ENCODE measurements at regions of chr11 and their contacts with region 1.

Region 1: GRCh38 chr11:65027213-65028067 is at the start of gene SNX15:
- DNase-seq: peak; percentile 77 to 96 (median 90)
- ATAC-seq: peak; percentile 96
- H3K4me3 ChIP-seq: peak within 1 kb of the TSS; percentile 34 to 54
- H3K4me3 Mint-ChIP-seq: peak within 1 kb of the TSS; percentile 69
- H3K27ac ChIP-seq: peak within 1 kb of the TSS; percentile 41 to 71
- H3K27ac Mint-ChIP-seq: peak within 1 kb of the TSS; percentile 80
- H3K4me1 ChIP-seq: peaks cover 19% of the 10 kb centered on the region
- H3K4me1 Mint-ChIP-seq: peaks cover 18% of the 10 kb centered on the region
- H3K27me3 ChIP-seq: no peaks in the 10 kb centered on the region
- H3K27me3 Mint-ChIP-seq: no peaks in the 10 kb centered on the region
- CTCF ChIP-seq: peak; percentile 80
- total RNA-seq, gene SNX15: 10.4 to 14.0 TPM

Region 2: GRCh38 chr11:64842851-64843685 is 184.4 kb before region 1 on chr11:
- CTCF ChIA-PET with region 1: no interaction called
- POLR2A ChIA-PET with region 1: no interaction called
- intact Hi-C with region 1: no loop called
- DNase-seq: no peak
- ATAC-seq: no peak
- H3K4me3 ChIP-seq: no peak overlapping the region
- H3K4me3 Mint-ChIP-seq: peak overlapping the region; percentile 55
- H3K27ac ChIP-seq: no peak overlapping the region
- H3K27ac Mint-ChIP-seq: no peak overlapping the region
- H3K4me1 ChIP-seq: peaks cover 27% of the 10 kb centered on the region
- H3K4me1 Mint-ChIP-seq: peaks cover 26% of the 10 kb centered on the region
- H3K27me3 ChIP-seq: no peaks in the 10 kb centered on the region
- H3K27me3 Mint-ChIP-seq: no peaks in the 10 kb centered on the region
- CTCF ChIP-seq: no peak

Region 3: DNA sequence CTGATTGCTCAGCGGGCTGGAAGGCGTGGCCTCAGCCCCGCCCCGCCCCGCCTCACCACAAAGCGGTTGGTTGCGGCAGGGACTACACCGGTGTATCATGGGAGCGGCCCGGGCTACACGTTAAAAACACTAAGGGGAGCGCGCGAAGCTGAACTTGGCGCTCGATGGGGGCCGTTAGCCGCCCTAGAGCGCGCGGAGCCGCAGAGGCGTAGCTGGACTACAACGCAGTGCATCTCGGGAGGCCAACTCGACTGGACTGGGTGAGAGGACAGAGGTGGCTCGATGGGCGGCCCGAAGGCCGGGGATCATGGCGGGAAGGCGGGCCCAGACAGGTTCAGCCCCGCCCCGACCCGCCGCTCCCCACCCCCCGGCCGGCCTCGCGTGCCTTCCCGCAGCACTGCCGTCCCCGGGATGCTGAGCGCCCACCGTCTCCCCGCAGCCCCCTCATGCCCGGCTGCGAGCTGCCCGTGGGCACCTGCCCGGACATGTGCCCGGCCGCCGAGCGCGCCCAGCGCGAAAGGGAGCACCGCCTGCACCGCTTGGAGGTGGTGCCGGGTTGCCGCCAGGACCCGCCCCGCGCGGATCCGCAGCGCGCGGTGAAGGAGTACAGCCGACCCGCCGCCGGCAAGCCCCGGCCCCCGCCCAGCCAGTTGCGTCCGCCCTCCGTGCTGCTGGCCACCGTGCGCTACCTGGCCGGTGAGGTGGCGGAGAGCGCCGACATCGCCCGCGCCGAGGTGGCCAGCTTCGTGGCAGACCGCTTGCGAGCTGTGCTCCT is 13.6 kb after region 1 on chr11 and contains the start of gene SAC3D1:
- CTCF ChIA-PET with region 1: interaction called, 7 read pairs
- POLR2A ChIA-PET with region 1: interaction called, 20 read pairs
- intact Hi-C with region 1: loop called (anchors 1 kb)
- DNase-seq: peak; percentile 67 to 94 (median 85)
- ATAC-seq: peak; percentile 90
- H3K4me3 ChIP-seq: peak within 1 kb of the TSS; percentile 63 to 76
- H3K4me3 Mint-ChIP-seq: peak within 1 kb of the TSS; percentile 93
- H3K27ac ChIP-seq: peak within 1 kb of the TSS; percentile 34 to 82
- H3K27ac Mint-ChIP-seq: peak within 1 kb of the TSS; percentile 91
- H3K4me1 ChIP-seq: peaks cover 17% of the 10 kb centered on the region
- H3K4me1 Mint-ChIP-seq: peaks cover 15% of the 10 kb centered on the region
- H3K27me3 ChIP-seq: no peaks in the 10 kb centered on the region
- H3K27me3 Mint-ChIP-seq: no peaks in the 10 kb centered on the region
- CTCF ChIP-seq: no peak
- total RNA-seq, gene SAC3D1: 0.57 to 0.94 TPM

Region 4: DNA sequence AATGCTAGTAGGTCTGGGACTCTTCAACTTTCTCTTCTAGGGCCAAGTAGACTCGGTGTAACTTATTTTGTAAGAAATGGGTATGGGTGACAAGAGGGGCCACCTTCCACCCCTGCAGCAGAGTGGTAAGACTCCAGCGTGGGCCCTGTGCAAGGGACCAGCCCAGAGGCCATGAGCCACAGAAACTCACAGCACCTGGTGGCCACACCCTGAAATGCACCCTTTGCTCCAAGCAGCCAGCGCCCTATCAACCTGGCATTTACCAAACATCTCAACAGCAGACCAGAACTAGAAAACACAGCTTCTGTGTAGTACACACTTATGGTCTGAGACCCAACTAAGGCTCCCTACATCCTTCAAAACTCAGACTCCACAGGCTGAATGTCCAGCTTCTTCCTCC is 50.7 kb after region 1 on chr11:
- CTCF ChIA-PET with region 1: interaction called, 5 read pairs
- POLR2A ChIA-PET with region 1: no interaction called
- intact Hi-C with region 1: loop called (anchors 1 to 5 kb)
- DNase-seq: peak; percentile 50 to 80 (median 74)
- ATAC-seq: peak; percentile 100
- H3K4me3 ChIP-seq: no peak overlapping the region
- H3K4me3 Mint-ChIP-seq: no peak overlapping the region
- H3K27ac ChIP-seq: no peak overlapping the region
- H3K27ac Mint-ChIP-seq: no peak overlapping the region
- H3K4me1 ChIP-seq: peaks cover 6% of the 10 kb centered on the region
- H3K4me1 Mint-ChIP-seq: peaks cover 10% of the 10 kb centered on the region
- H3K27me3 ChIP-seq: no peaks in the 10 kb centered on the region
- H3K27me3 Mint-ChIP-seq: no peaks in the 10 kb centered on the region
- CTCF ChIP-seq: peak; percentile 70

Region 5: GRCh38 chr11:65083834-65084597 is 56.6 kb after region 1 on chr11 and contains the starts of genes CDCA5 and ZFPL1:
- CTCF ChIA-PET with region 1: interaction called, 5 read pairs
- POLR2A ChIA-PET with region 1: no interaction called
- intact Hi-C with region 1: loop called (anchors 1 to 5 kb)
- DNase-seq: peak; percentile 94 to 98 (median 96)
- ATAC-seq: peak; percentile 88
- H3K4me3 ChIP-seq: peak within 1 kb of the TSS; percentile 71 to 87
- H3K4me3 Mint-ChIP-seq: peak within 1 kb of the TSS; percentile 93
- H3K27ac ChIP-seq: peak within 1 kb of the TSS; percentile 90 to 97
- H3K27ac Mint-ChIP-seq: peak within 1 kb of the TSS; percentile 99
- H3K4me1 ChIP-seq: peaks cover 17% of the 10 kb centered on the region
- H3K4me1 Mint-ChIP-seq: peaks cover 27% of the 10 kb centered on the region
- H3K27me3 ChIP-seq: no peaks in the 10 kb centered on the region
- H3K27me3 Mint-ChIP-seq: no peaks in the 10 kb centered on the region
- CTCF ChIP-seq: no peak
- total RNA-seq, gene CDCA5: 0.76 to 1.2 TPM
- total RNA-seq, gene ZFPL1: 52.3 to 52.6 TPM

Region 6: GRCh38 chr11:65095974-65096806 is 68.8 kb after region 1 on chr11 and contains the start of gene VPS51:
- CTCF ChIA-PET with region 1: interaction called, 3 read pairs
- POLR2A ChIA-PET with region 1: interaction called, 3 read pairs
- intact Hi-C with region 1: loop called (anchors 1 kb)
- DNase-seq: peak; percentile 70 to 95 (median 85)
- ATAC-seq: peak; percentile 84
- H3K4me3 ChIP-seq: peak within 1 kb of the TSS; percentile 80 to 81
- H3K4me3 Mint-ChIP-seq: peak within 1 kb of the TSS; percentile 95
- H3K27ac ChIP-seq: peak within 1 kb of the TSS; percentile 82 to 89
- H3K27ac Mint-ChIP-seq: peak within 1 kb of the TSS; percentile 99
- H3K4me1 ChIP-seq: peaks cover 12% of the 10 kb centered on the region
- H3K4me1 Mint-ChIP-seq: peaks cover 24% of the 10 kb centered on the region
- H3K27me3 ChIP-seq: no peaks in the 10 kb centered on the region
- H3K27me3 Mint-ChIP-seq: no peaks in the 10 kb centered on the region
- CTCF ChIP-seq: no peak
- total RNA-seq, gene VPS51: 221 to 263 TPM

Region 7: GRCh38 chr11:65180877-65181568 is 153.6 kb after region 1 on chr11:
- CTCF ChIA-PET with region 1: no interaction called
- POLR2A ChIA-PET with region 1: no interaction called
- intact Hi-C with region 1: loop called in 1 of 2 experiments (anchors 2 kb)
- DNase-seq: peak; percentile 17 to 73 (median 53)
- ATAC-seq: peak; percentile 68
- H3K4me3 ChIP-seq: peak overlapping the region; percentile 85 to 95
- H3K4me3 Mint-ChIP-seq: peak overlapping the region; percentile 91
- H3K27ac ChIP-seq: peak overlapping the region in 1 of 2 experiments; percentile 23
- H3K27ac Mint-ChIP-seq: peak overlapping the region; percentile 80
- H3K4me1 ChIP-seq: peaks cover 24% of the 10 kb centered on the region
- H3K4me1 Mint-ChIP-seq: peaks cover 28% of the 10 kb centered on the region
- H3K27me3 ChIP-seq: no peaks in the 10 kb centered on the region
- H3K27me3 Mint-ChIP-seq: no peaks in the 10 kb centered on the region
- CTCF ChIP-seq: peak; percentile 57